ENCODE measurements at regions of chr2 and their contacts with region 1.

Region 1: DNA sequence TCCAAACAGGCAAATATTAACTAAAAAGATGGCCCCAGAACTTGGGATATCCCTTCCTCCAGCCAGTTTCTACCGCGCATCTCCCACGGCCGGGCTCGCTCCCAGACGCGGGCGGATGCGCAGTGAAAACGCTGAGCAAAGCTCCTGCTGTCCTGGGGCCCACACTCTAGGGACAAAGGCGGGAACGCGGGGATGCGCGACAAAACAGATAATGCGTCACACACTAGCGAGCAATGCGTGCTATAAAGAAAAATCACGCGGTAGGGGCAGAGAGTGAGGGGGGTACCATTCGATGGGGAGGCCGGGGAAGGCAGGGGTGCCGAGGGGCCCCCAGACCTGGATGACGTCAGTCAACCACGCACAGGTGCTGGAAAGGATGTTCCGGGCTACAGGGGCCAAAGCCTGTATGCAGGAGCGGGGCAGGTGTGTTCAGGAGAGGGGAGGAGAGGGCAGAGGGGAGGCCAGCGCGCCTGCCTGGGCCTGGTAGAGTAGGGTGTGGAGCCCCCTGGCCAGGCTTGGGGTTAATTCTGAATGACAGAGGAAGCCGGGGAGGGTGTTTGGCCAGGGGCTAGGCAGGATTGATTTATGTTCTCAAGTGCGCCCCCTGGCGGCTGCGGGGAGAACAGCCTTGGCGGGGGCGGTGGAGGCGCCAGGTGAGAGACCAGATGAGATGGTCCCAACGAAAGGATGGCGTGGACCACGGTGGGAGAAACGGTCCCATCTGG is 14.9 kb upstream of the ITM2C start:
- DNase-seq: peak in 2 of 3 donors; percentile 69 to 72
- ATAC-seq: peak; percentile 38
- H3K4me3 ChIP-seq: no peak overlapping the region
- H3K4me1 ChIP-seq: no peaks in the 10 kb centered on the region
- CTCF ChIP-seq: peak; percentile 56

Region 2: GRCh38 chr2:230902180-230902899 is 52.5 kb after region 1 on chr2:
- intact Hi-C with region 1: loop called in 1 of 2 experiments (anchors 10 kb)
- DNase-seq: peak in 2 of 3 donors; percentile 53 to 58
- ATAC-seq: peak; percentile 77
- H3K4me3 ChIP-seq: no peak overlapping the region
- H3K4me1 ChIP-seq: no peaks in the 10 kb centered on the region
- CTCF ChIP-seq: peak; percentile 41

Region 3: GRCh38 chr2:230913406-230914143 is 63.8 kb after region 1 on chr2:
- intact Hi-C with region 1: loop called (anchors 10 kb)
- DNase-seq: peak; percentile 49 to 70 (median 59)
- ATAC-seq: peak; percentile 77
- H3K4me3 ChIP-seq: no peak overlapping the region
- H3K4me1 ChIP-seq: peaks cover 3% of the 10 kb centered on the region
- CTCF ChIP-seq: peak; percentile 52

Region 4: GRCh38 chr2:230947908-230948365 is 98.1 kb after region 1 on chr2:
- intact Hi-C with region 1: no loop called
- DNase-seq: no peak
- ATAC-seq: peak; percentile 20
- H3K4me3 ChIP-seq: no peak overlapping the region
- H3K4me1 ChIP-seq: no peaks in the 10 kb centered on the region
- CTCF ChIP-seq: no peak

Region 5: GRCh38 chr2:231212329-231212845 is 362.6 kb after region 1 on chr2:
- intact Hi-C with region 1: no loop called
- DNase-seq: no peak
- ATAC-seq: no peak
- H3K4me3 ChIP-seq: no peak overlapping the region
- H3K4me1 ChIP-seq: no peaks in the 10 kb centered on the region
- CTCF ChIP-seq: no peak

Measured in mucosa of descending colon (tissue), 3 donors.